Activated CD4-positive, alpha-beta T cell treated with anti-CD3 and anti-CD28 coated beads, Interleukin-2, amount 10 ng/mL, durations not matched to agents 7 days and 5 days (primary cell): ENCODE measurements at regions of chr14 and their contacts with region 1.

Region 1: DNA sequence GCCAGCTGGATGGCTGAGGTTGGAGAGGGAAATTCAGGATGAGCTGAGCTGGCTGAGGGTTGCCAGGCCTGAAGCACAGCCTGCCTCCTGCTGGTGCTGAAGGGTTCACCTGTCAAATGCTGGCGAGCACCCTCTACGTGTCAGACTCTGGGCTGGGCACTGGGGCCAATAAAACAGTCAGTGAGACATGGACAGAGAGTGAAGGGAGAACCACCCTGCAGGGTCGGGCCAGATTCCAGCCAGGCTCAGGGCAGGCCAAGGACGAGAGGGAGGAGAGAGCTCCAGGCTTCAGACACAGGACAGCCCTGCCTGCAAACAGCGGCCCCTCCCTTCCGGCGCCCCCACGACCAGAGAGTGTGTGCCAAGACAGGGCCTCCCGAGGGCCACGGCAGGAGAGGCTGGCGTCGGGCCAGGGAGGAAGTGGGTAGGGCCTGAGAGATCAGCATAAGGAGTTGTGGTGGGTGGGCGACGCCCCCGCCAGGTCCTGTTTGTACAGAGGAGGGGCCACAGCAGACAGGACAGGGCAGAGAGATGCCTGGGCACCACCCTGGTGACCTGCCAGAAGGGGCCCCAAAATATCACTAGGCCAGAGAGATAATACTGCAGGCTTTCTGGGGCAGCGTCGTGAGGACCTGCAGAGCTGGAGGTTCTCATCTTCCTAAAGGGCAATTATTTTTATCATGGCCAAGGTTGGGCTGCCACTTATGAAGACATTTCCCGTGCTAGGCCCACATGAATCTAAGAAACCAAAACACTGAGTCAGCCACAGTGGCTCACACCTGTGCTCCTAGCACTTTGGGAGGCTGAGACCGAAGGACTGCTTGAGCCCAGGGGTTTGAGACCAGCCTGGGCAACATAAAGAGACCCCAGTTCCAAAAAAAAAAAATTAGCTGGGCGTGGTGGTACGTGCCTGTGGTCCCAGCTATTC is 73.1 kb upstream of the GPR68 start:
- DNase-seq: peak; percentile 85
- H3K4me3 Mint-ChIP-seq: peak overlapping the region; percentile 66
- H3K27ac Mint-ChIP-seq: peak overlapping the region; percentile 94
- H3K4me1 Mint-ChIP-seq: peaks cover 85% of the 10 kb centered on the region
- H3K27me3 Mint-ChIP-seq: no peaks in the 10 kb centered on the region

Region 2: GRCh38 chr14:91330856-91331587 is 13.4 kb after region 1 on chr14:
- CTCF ChIA-PET with region 1: interaction called, 13 read pairs
- POLR2A ChIA-PET with region 1: no interaction called
- DNase-seq: no peak
- H3K4me3 Mint-ChIP-seq: no peak overlapping the region
- H3K27ac Mint-ChIP-seq: peak overlapping the region; percentile 87
- H3K4me1 Mint-ChIP-seq: peaks cover 71% of the 10 kb centered on the region
- H3K27me3 Mint-ChIP-seq: no peaks in the 10 kb centered on the region

Region 3: DNA sequence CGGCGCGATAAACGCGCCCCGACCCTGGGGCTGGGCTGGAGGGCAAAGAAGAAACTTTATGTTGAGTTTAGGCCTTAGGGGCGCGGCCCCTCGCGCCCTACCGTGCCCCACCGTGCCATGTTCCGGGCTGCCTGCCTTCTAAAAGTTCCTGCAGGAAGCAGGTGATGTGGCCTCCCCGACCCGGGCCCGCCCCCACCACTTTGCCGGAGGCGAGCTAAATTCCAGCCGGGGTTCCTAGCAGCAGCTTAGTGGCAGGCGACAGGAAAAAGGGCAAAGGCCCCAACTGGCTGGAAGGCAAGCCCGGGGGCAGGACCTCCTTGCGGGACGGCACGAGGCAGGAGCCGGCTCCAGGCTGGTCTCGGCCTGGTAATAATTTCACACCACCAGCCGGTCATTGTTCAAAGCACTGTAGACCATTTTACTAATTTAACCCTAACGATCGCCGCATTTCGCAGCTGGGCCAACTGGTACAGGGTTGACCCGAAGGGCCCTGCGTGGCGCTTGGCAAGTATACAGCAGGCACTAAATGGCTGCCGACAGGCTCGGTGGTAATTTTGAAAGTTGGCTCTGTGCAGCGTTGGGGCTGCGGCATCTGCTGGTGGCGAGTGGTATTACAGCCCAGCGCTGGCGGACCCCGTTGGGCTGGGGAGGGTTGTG is 100.9 kb after region 1 on chr14:
- CTCF ChIA-PET with region 1: interaction called, 12 read pairs
- POLR2A ChIA-PET with region 1: interaction called, 3 read pairs
- DNase-seq: peak; percentile 80
- H3K4me3 Mint-ChIP-seq: peak overlapping the region; percentile 65
- H3K27ac Mint-ChIP-seq: peak overlapping the region; percentile 88
- H3K4me1 Mint-ChIP-seq: peaks cover 36% of the 10 kb centered on the region
- H3K27me3 Mint-ChIP-seq: no peaks in the 10 kb centered on the region

Region 4: GRCh38 chr14:91755528-91756295 is 438.1 kb after region 1 on chr14:
- CTCF ChIA-PET with region 1: no interaction called
- POLR2A ChIA-PET with region 1: no interaction called
- DNase-seq: no peak
- H3K4me3 Mint-ChIP-seq: no peak overlapping the region
- H3K27ac Mint-ChIP-seq: no peak overlapping the region
- H3K4me1 Mint-ChIP-seq: no peaks in the 10 kb centered on the region
- H3K27me3 Mint-ChIP-seq: no peaks in the 10 kb centered on the region